Ascending aorta (tissue), 2 donors: ENCODE measurements at regions of chr12 and their contacts with region 1.

Region 1: GRCh38 chr12:67681105-67681778 is 32.7 kb downstream of the DYRK2 start:
- DNase-seq: peak in 1 of 2 donors; percentile 69
- H3K4me3 ChIP-seq: no peak overlapping the region
- H3K27ac ChIP-seq: peak overlapping the region; percentile 72 to 90
- H3K4me1 ChIP-seq: peaks cover 0 to 23% of the 10 kb centered on the region in 2 donors
- H3K27me3 ChIP-seq: no peaks in the 10 kb centered on the region
- CTCF ChIP-seq: no peak

Region 2: DNA sequence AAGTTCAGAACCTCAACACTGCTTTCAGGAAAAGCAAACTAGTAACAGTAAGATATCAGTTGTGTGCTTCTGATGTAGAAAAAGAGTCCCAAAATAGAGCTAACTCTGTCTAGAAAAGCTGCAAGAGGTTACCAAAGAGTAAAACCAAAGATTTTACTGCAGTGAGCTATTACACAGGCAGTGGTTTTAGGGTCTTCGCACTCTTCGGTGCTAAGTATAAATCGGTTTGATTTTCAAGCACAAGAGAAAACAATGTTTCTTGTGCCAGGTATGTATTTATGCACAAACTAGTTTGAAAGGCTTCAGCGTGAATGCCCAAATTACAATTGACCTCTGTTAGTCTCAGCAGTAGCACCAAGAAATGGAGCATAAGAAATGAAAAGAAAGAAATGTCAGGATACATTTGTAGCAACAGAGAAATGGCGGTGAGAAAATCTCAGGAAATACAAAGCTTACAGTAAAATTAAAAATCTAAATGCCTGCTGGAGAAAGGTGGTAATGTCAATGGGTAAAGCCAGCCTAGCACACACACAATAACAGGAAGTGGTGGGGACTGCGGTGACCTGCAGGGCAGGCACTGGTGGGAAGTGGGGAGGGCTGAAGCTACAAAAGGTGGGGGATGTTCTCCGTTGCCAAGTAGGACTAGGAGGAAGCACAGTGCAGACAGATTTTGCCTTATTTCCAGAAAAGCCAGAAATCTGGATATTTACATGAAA is 50.7 kb before region 1 on chr12:
- intact Hi-C with region 1: no loop called
- DNase-seq: no peak
- H3K4me3 ChIP-seq: no peak overlapping the region
- H3K27ac ChIP-seq: no peak overlapping the region
- H3K4me1 ChIP-seq: peaks cover 3 to 7% of the 10 kb centered on the region in 2 donors
- H3K27me3 ChIP-seq: no peaks in the 10 kb centered on the region
- CTCF ChIP-seq: no peak

Region 3: GRCh38 chr12:67716817-67717216 is 35.6 kb after region 1 on chr12:
- intact Hi-C with region 1: loop called (anchors 1 kb)
- DNase-seq: no peak
- H3K4me3 ChIP-seq: no peak overlapping the region
- H3K27ac ChIP-seq: peak overlapping the region; percentile 31 to 63
- H3K4me1 ChIP-seq: peaks cover 0 to 22% of the 10 kb centered on the region in 2 donors
- H3K27me3 ChIP-seq: no peaks in the 10 kb centered on the region
- CTCF ChIP-seq: no peak